ENCODE measurements at regions of chr21 and their contacts with region 1.

Region 1: GRCh38 chr21:26715878-26716506 is 129.2 kb downstream of the ADAMTS1 start:
- DNase-seq: peak; percentile 73
- H3K4me3 ChIP-seq: no peak overlapping the region
- H3K27ac ChIP-seq: no peak overlapping the region
- H3K4me1 ChIP-seq: no peaks in the 10 kb centered on the region
- H3K27me3 ChIP-seq: no peaks in the 10 kb centered on the region

Region 2: GRCh38 chr21:25607151-25608043 is 1108.6 kb before region 1 on chr21 and contains the start of gene MRPL39:
- in situ Hi-C with region 1: loop called (anchors 25 kb)
- DNase-seq: peak; percentile 95
- H3K4me3 ChIP-seq: peak within 1 kb of the TSS; percentile 94
- H3K27ac ChIP-seq: peak within 1 kb of the TSS; percentile 63
- H3K4me1 ChIP-seq: peaks cover 9% of the 10 kb centered on the region; the same call in 1 of the 2 replicates
- H3K27me3 ChIP-seq: no peaks in the 10 kb centered on the region
- total RNA-seq, gene MRPL39: 24.4 and 26.1 TPM in 2 replicates

Region 3: GRCh38 chr21:25881525-25882376 is 834.2 kb before region 1 on chr21:
- in situ Hi-C with region 1: loop called (anchors 25 kb)
- DNase-seq: peak; percentile 67
- H3K4me3 ChIP-seq: no peak overlapping the region
- H3K27ac ChIP-seq: no peak overlapping the region
- H3K4me1 ChIP-seq: no peaks in the 10 kb centered on the region
- H3K27me3 ChIP-seq: no peaks in the 10 kb centered on the region

Region 4: DNA sequence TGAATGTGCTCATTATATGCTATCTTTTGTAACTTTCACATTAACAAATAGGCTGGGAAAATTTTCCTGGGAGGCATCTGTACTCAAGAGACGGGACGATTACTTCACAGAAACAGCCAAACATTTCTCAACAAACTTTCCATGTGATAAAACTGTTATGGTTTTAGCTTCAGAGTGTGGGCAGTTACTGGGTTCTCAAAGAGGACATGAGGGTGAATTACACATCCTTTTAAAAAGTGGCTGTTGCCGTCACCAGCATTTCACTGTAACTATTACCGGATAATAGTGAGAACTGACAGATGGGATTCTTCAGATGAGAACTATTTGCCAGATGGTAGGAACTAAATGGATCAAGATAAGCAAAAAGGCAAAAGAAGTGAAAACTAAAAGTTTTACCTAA is 654.6 kb before region 1 on chr21:
- in situ Hi-C with region 1: no loop called
- DNase-seq: peak; percentile 35
- H3K4me3 ChIP-seq: no peak overlapping the region
- H3K27ac ChIP-seq: no peak overlapping the region
- H3K4me1 ChIP-seq: no peaks in the 10 kb centered on the region
- H3K27me3 ChIP-seq: no peaks in the 10 kb centered on the region

Region 5: GRCh38 chr21:26550326-26550725 is 165.7 kb before region 1 on chr21:
- in situ Hi-C with region 1: no loop called
- DNase-seq: peak; percentile 4
- H3K4me3 ChIP-seq: no peak overlapping the region
- H3K27ac ChIP-seq: no peak overlapping the region
- H3K4me1 ChIP-seq: no peaks in the 10 kb centered on the region
- H3K27me3 ChIP-seq: 0 out of 2 replicates have a peak, but pooled peaks cover 3% of the 10 kb centered on the region

Region 6: GRCh38 chr21:27570306-27570868 is 854.4 kb after region 1 on chr21:
- in situ Hi-C with region 1: no loop called
- DNase-seq: peak; percentile 95
- H3K4me3 ChIP-seq: peak overlapping the region; percentile 20
- H3K27ac ChIP-seq: peak overlapping the region; percentile 97
- H3K4me1 ChIP-seq: peaks cover 59% of the 10 kb centered on the region
- H3K27me3 ChIP-seq: no peaks in the 10 kb centered on the region

Measured in GM23248 (cell line).